Endothelial cell of umbilical vein (primary cell): ENCODE measurements at regions of chr15 and their contacts with region 1.

Region 1: DNA sequence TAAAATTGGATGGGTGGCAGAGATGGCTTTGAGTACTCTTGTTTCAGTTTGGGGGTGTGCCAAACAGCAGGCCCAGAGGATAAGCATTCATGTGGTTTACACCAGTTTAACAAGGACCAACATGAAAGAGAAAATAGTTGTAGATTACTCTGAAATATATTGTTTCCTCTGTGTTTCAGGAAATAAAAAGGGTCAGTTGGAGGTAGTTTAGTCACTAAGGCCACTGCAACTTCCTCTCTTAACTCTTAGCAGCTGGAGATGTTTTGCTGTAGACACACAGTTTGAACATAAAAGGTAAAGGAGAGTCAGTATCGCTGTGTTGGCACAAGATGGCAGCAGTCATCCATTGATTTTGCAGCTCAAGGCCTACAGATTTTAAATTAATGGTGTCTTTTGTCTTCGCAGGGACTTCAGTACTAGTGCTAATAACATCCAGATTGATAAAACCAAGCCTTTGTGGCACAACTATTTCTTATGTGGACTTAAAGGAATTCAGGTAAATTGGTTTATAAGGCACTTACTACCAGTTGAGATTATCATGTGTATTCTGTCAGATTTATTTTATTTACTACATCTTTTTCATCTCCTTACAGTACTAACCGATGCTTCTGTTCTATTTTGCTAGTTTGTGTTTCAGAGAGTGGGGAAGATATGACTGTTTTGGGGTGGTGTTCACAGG is 65.5 kb downstream of the GALK2 start:
- DNase-seq: peak; percentile 92
- H3K4me3 ChIP-seq: no peak overlapping the region
- H3K27ac ChIP-seq: no peak overlapping the region
- H3K4me1 ChIP-seq: peaks cover 7% of the 10 kb centered on the region
- H3K27me3 ChIP-seq: no peaks in the 10 kb centered on the region
- CTCF ChIP-seq: peak; percentile 63 to 67
- POLR2A ChIP-seq: no peak

Region 2: DNA sequence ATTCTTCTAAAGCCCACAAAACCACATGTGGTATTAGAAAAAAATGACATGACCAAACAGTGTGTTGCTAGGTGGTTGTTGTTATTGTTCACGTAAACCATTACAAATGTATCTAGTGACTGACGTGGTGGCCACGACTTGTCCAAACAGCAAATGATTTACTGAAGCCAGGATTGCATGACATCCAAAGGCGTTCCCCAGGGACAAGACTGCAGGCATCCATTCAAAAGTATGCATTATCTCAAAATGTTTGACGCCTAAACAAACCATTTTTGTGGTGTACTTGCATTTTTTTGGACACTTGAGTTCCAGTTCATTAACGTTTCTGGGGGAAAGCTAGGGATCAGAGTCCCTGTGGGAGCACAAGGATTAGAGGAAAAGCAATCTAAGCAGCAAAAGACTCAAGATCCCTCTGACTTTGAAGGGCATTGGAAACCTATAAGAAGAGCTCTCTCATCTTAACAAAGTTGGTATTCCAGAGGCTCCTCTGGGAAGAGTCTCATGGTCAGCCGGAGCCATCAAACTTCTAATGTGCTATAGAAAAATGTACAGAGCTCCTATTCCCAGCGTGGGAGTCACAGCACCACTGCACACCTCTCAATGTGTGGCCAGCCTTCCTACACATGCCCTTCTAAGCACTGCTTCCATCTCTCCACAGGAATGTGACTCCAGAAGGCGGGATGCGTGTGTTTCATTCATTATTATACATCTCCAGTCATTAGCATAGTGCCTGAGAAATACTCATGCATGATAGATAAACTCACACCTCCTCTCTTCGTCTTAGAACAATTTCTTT is 652.9 kb before region 1 on chr15:
- CTCF ChIA-PET with region 1: no interaction called
- POLR2A ChIA-PET with region 1: no interaction called
- dilution Hi-C with region 1: no loop called
- intact Hi-C with region 1: no loop called
- DNase-seq: no peak
- H3K4me3 ChIP-seq: no peak overlapping the region
- H3K27ac ChIP-seq: no peak overlapping the region
- H3K4me1 ChIP-seq: peaks cover 5% of the 10 kb centered on the region
- H3K27me3 ChIP-seq: no peaks in the 10 kb centered on the region
- CTCF ChIP-seq: no peak
- POLR2A ChIP-seq: no peak

Region 3: GRCh38 chr15:49212930-49213329 is 22.7 kb before region 1 on chr15:
- CTCF ChIA-PET with region 1: no interaction called
- POLR2A ChIA-PET with region 1: no interaction called
- dilution Hi-C with region 1: no loop called
- intact Hi-C with region 1: no loop called
- DNase-seq: no peak
- H3K4me3 ChIP-seq: no peak overlapping the region
- H3K27ac ChIP-seq: no peak overlapping the region
- H3K4me1 ChIP-seq: no peaks in the 10 kb centered on the region
- H3K27me3 ChIP-seq: no peaks in the 10 kb centered on the region
- CTCF ChIP-seq: no peak
- POLR2A ChIP-seq: no peak

Region 4: DNA sequence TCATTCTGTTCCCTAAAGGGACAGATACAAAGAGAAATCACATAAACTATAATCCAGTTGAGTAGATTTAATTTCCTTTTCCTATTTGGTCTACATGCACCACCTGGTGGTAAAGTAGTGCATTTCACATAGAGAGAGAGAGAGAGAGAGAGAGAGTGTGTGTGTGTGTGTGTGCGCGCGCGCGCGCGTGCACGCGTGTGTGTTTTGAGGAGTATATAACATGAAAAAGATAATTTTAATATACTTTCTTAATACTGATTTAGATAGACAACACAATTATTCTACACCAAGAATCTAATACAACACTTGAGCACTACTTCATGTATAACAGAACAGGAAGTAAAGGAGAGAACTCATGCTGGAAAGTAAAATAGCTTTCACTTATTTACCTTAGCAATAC is 186.4 kb after region 1 on chr15:
- CTCF ChIA-PET with region 1: interaction called, 282 read pairs
- POLR2A ChIA-PET with region 1: no interaction called
- dilution Hi-C with region 1: no loop called
- intact Hi-C with region 1: loop called (anchors 1 kb)
- DNase-seq: peak; percentile 65
- H3K4me3 ChIP-seq: peak overlapping the region in 1 of 3 experiments; percentile 9
- H3K27ac ChIP-seq: no peak overlapping the region
- H3K4me1 ChIP-seq: peaks cover 2% of the 10 kb centered on the region
- H3K27me3 ChIP-seq: peaks cover 0 to 3% of the 10 kb centered on the region in 2 experiments
- CTCF ChIP-seq: peak; percentile 58 to 78
- POLR2A ChIP-seq: no peak

Region 5: DNA sequence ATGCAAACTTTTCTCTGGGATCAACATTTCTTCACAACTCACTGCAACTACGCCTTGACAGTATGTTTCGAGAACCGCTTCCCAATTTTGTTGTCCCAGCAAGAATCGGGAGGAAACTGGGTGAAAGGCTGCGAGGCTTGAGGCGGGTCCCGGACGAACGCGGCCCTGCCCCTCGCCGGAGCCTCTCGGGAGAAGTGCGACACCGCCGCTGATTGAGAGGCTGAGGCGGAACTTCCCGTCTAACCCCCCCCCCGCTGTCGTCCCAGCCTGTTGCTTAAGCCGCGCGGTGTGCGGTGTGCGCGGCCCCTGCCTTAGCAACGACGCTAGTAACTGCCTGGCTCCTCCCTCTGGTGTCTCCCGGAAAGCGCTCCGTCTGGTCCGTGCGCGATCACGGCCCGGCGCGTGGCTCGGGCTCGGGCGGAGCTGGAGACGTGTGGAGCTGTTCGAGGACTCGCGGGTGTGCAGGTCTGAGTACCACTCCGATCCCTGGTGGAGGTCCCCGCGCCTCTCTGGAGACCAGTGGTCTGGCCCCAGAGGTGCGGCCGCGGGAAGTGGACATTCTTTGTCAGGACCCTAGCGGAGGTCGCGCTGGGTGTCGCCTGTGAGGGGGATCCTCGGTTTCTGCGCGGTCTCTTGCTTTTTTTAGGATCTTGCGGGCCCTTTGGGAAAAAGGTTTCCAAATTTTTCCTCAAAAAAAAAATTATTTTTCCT is 385.2 kb after region 1 on chr15 and contains the starts of genes DTWD1 and FAM227B:
- CTCF ChIA-PET with region 1: no interaction called
- POLR2A ChIA-PET with region 1: no interaction called
- dilution Hi-C with region 1: no loop called
- intact Hi-C with region 1: loop called (anchors 10 kb)
- DNase-seq: peak; percentile 98
- H3K4me3 ChIP-seq: peak within 1 kb of the TSS; percentile 79 to 95 (median 91)
- H3K27ac ChIP-seq: peak within 1 kb of the TSS; percentile 64
- H3K4me1 ChIP-seq: peaks cover 11% of the 10 kb centered on the region
- H3K27me3 ChIP-seq: no peaks in the 10 kb centered on the region
- CTCF ChIP-seq: no peak
- POLR2A ChIP-seq: peak; percentile 88
- total RNA-seq, gene DTWD1: 18.7 and 20.1 TPM in 2 replicates
- total RNA-seq, gene FAM227B: 1.5 and 1.8 TPM in 2 replicates

Region 6: DNA sequence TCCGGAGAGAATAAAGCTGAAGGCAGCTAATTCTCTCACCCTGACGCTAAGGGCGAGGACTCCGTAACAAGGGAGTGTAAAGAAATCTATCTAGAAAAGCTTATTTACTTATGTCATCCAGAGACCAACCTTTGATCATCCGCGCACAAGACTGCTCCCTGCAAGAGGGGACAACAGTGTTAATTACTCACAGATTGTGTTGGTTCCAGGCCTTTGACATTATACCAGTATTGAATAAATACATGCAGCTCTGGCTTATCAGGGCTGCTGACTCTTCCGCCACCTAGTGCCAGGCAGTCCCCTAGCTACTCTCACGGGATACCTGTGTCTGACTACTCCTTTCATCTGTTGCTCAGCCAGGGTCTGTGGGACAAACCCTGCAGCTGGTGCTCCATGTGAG is 596.9 kb after region 1 on chr15:
- CTCF ChIA-PET with region 1: no interaction called
- POLR2A ChIA-PET with region 1: no interaction called
- dilution Hi-C with region 1: no loop called
- intact Hi-C with region 1: loop called (anchors 2 kb)
- DNase-seq: no peak
- H3K4me3 ChIP-seq: no peak overlapping the region
- H3K27ac ChIP-seq: peak overlapping the region; percentile 15
- H3K4me1 ChIP-seq: peaks cover 8% of the 10 kb centered on the region
- H3K27me3 ChIP-seq: no peaks in the 10 kb centered on the region
- CTCF ChIP-seq: peak in 1 of 2 donors; percentile 12
- POLR2A ChIP-seq: no peak

Region 7: GRCh38 chr15:50003786-50004334 is 768.3 kb after region 1 on chr15:
- CTCF ChIA-PET with region 1: interaction called, 53 read pairs
- POLR2A ChIA-PET with region 1: no interaction called
- dilution Hi-C with region 1: no loop called
- intact Hi-C with region 1: loop called (anchors 1 kb)
- DNase-seq: peak; percentile 63
- H3K4me3 ChIP-seq: no peak overlapping the region
- H3K27ac ChIP-seq: no peak overlapping the region
- H3K4me1 ChIP-seq: no peaks in the 10 kb centered on the region
- H3K27me3 ChIP-seq: peaks cover 0 to 28% of the 10 kb centered on the region in 2 experiments
- CTCF ChIP-seq: peak; percentile 74 to 75
- POLR2A ChIP-seq: no peak

Region 8: GRCh38 chr15:50051803-50052419 is 816.3 kb after region 1 on chr15:
- CTCF ChIA-PET with region 1: interaction called, 11 read pairs
- POLR2A ChIA-PET with region 1: no interaction called
- dilution Hi-C with region 1: no loop called
- intact Hi-C with region 1: loop called (anchors 2 kb)
- DNase-seq: peak; percentile 50
- H3K4me3 ChIP-seq: no peak overlapping the region
- H3K27ac ChIP-seq: no peak overlapping the region
- H3K4me1 ChIP-seq: no peaks in the 10 kb centered on the region
- H3K27me3 ChIP-seq: peaks cover 7 to 9% of the 10 kb centered on the region in 2 experiments
- CTCF ChIP-seq: peak; percentile 34 to 58
- POLR2A ChIP-seq: no peak